Transverse colon (tissue), 4 donors: ENCODE measurements at regions of chr6 and their contacts with region 1.

Region 1: DNA sequence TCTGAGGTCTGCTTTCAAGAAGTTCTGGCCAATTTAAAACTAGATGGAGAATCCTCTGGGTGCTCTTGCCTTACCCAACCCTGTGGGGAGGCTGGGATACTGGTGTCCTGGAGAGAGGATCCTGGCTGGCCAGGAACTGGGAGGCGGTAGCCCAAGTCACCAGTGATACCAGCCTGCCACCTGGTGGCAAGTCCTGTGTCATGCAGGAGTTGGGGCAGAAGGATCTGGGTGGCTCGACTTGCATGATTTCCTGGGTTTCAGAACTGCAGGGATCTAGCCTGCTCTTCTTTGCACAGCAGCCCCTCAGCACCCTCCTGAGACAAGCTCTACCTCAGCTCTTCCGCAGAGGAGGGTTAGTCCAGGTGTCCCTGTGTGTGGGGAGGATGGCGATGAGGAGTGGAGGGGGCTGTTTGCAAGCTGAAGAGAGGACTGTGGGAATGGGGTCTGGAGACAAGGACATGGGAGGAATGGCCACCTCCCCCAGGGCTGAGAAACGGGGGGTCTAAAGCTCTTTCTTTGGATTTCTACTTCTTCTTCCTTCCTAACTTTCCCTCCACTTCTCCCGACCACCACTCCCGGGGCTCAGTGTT is 4.2 kb downstream of the KCNK17 start:
- DNase-seq: peak; percentile 79
- H3K4me3 ChIP-seq: no peak overlapping the region
- H3K27ac ChIP-seq: no peak overlapping the region
- H3K4me1 ChIP-seq: peaks cover 0 to 13% (median 13%) of the 10 kb centered on the region in 4 donors
- H3K27me3 ChIP-seq: peaks cover 39% of the 10 kb centered on the region
- CTCF ChIP-seq: peak; percentile 83 to 96 (median 86)
- EP300 ChIP-seq: no peak
- POLR2A ChIP-seq: no peak

Region 2: DNA sequence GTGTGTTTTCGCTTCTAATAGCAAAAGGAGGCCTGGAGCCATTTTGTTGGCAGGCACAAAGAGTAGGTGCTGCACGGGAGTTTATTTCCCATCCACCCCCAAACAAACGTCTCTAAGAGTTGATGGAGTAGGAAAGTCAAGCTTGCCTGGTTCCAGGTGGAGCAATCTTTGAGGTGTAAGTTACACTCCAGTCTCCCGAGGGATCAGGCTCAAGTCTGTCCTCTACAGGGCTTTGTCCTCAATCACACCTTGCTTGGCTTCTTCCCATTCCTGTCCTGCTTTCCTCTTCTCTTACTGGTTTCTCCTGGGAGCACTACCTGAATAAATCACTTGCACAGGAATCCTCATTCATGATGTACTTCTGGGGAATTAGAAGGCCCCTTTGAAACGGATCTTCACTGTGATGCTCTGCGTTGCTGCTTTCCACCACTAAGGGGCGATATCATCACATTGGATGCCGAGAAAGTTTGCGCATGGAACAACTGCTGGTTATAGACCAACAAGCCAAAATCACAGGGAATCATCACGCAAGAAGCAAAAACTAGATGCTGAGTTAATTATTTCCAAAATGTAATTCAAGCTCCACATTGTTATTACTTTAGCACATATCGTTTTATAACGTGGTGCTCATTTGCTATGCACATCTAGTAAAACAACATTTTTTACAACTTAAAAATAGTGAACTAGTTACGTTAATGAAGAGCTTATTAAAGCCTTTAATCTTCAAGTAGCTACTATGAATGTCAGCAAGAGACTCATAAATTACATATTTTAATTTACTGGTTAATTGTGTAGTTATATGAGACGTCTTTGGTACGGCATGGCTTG is 438.1 kb before region 1 on chr6:
- in situ Hi-C with region 1: loop called (anchors 5 to 25 kb)
- intact Hi-C with region 1: loop called (anchors 5 kb)
- DNase-seq: peak; percentile 47
- H3K4me3 ChIP-seq: no peak overlapping the region
- H3K27ac ChIP-seq: no peak overlapping the region
- H3K4me1 ChIP-seq: no peaks in the 10 kb centered on the region
- H3K27me3 ChIP-seq: peaks cover 11% of the 10 kb centered on the region
- CTCF ChIP-seq: peak; percentile 73 to 84 (median 77)
- EP300 ChIP-seq: no peak
- POLR2A ChIP-seq: no peak

Region 3: DNA sequence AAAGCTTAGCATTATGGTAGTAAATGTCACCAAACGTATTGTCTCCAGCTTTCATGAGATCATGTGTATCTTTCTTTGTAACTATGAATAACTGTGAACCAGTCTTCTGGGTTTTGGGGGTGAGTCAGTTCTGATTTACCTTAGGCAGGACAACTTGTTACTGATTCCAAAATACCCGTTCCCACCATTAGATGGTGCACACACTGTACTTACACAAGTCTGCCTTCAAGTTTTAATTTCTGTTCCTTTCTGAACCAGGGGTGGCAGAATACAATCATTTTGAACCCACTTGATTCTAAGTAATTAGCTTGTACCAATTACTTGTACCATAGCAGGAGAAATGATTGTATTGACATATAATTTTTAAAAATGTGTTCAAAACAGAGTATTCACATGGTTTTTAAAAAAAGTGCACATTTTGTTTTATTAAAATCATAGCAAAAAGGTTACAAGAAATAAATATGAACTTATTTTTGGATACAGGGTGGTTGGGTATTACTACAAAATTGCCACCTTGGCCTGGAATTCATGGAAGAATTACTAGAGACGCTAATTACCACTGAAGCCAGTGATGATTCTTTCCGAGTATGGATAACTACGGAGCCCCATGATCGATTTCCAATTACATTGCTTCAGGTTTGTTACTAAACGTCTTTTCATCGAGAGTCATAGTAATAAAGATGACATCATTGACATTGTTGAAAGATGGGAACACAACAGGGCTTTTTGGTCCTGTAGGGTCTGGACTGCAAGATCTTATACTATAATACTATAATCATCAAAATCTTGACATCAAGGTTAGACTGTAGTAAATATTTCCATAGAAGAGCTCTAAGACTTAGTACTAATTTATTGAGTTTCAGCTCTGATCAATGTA is 336.6 kb before region 1 on chr6:
- in situ Hi-C with region 1: loop called (anchors 25 kb)
- intact Hi-C with region 1: loop called (anchors 5 kb)
- DNase-seq: no peak
- H3K4me3 ChIP-seq: no peak overlapping the region
- H3K27ac ChIP-seq: no peak overlapping the region
- H3K4me1 ChIP-seq: peaks cover 0 to 6% (median 0%) of the 10 kb centered on the region in 4 donors
- H3K27me3 ChIP-seq: peaks cover 28% of the 10 kb centered on the region
- CTCF ChIP-seq: peak; percentile 43 to 67 (median 51)
- EP300 ChIP-seq: no peak
- POLR2A ChIP-seq: no peak

Region 4: GRCh38 chr6:39166189-39166911 is 143.7 kb before region 1 on chr6:
- in situ Hi-C with region 1: loop called in 1 of 4 experiments (anchors 5 kb)
- intact Hi-C with region 1: loop called (anchors 2 kb)
- DNase-seq: peak; percentile 84
- H3K4me3 ChIP-seq: no peak overlapping the region
- H3K27ac ChIP-seq: no peak overlapping the region
- H3K4me1 ChIP-seq: peaks cover 0 to 30% (median 20%) of the 10 kb centered on the region in 4 donors
- H3K27me3 ChIP-seq: peaks cover 3% of the 10 kb centered on the region
- CTCF ChIP-seq: peak; percentile 82 to 94 (median 86)
- EP300 ChIP-seq: no peak
- POLR2A ChIP-seq: no peak

Region 5: DNA sequence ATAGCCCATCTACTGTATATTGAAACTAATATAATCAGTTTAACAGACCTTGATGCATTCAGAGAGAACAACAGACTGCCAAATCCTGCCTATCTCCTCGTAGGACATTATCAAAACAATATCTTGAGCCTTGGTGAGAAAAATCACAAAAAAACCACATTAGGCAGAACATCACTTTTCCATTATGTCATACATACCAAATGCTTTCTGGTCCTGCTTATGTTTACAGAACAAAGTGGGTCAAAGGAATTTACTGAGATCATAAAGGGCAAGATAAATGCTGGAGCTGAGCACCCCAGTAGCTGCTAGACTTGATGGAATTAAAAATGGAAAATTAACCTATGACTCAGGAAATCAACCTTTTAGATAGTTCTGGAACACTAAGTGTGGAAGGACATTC is 207.7 kb after region 1 on chr6:
- in situ Hi-C with region 1: no loop called
- intact Hi-C with region 1: no loop called
- DNase-seq: no peak
- H3K4me3 ChIP-seq: no peak overlapping the region
- H3K27ac ChIP-seq: no peak overlapping the region
- H3K4me1 ChIP-seq: no peaks in the 10 kb centered on the region
- H3K27me3 ChIP-seq: no peaks in the 10 kb centered on the region
- CTCF ChIP-seq: no peak
- EP300 ChIP-seq: no peak
- POLR2A ChIP-seq: no peak